ENCODE measurements at regions of chr1 and their contacts with region 1.

Region 1: DNA sequence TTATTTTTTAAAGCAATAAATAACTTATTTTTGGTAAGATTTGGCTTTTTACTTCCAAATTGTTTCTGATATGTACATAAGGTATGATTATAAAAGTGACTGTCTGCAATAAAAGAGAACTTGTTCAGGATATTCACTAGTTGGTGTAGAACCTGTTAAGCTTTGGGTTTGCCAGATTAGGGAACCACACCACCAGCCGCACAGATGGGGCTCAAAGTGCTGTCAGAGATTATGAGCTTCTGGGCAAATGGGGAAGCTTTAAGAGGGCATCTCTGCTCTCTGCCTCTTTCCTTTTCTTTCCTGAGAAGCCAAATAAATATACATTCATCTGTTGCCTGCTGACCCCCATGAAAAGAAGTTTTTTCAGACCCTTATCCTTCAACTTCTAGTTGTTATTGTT is 25.4 kb downstream of the IVNS1ABP start:
- DNase-seq: peak; percentile 71 to 95 (median 93)
- H3K4me3 ChIP-seq: peak overlapping the region in 1 of 7 experiments; percentile 13
- H3K27ac ChIP-seq: no peak overlapping the region
- H3K4me1 ChIP-seq: peaks cover 8 to 22% (median 16%) of the 10 kb centered on the region in 4 experiments
- H3K27me3 ChIP-seq: no peaks in the 10 kb centered on the region

Region 2: GRCh38 chr1:185305419-185305818 is 13.8 kb after region 1 on chr1:
- CTCF ChIA-PET with region 1: interaction called, 18 read pairs
- POLR2A ChIA-PET with region 1: interaction called, 3 read pairs
- DNase-seq: no peak
- H3K4me3 ChIP-seq: no peak overlapping the region
- H3K27ac ChIP-seq: no peak overlapping the region
- H3K4me1 ChIP-seq: peaks cover 0 to 2% (median 0%) of the 10 kb centered on the region in 4 experiments
- H3K27me3 ChIP-seq: no peaks in the 10 kb centered on the region

Measured in common myeloid progenitor, CD34-positive (primary cell).